Prostate gland (tissue), 2 donors: ENCODE measurements at regions of chr19 and their contacts with region 1.

Region 1: GRCh38 chr19:801030-801860 is 4.0 kb downstream of the PTBP1 start:
- DNase-seq: no peak
- H3K4me3 ChIP-seq: peak overlapping the region in 1 of 2 donors; percentile 99
- H3K27ac ChIP-seq: peak overlapping the region; percentile 95 to 100
- H3K4me1 ChIP-seq: peaks cover 42% of the 10 kb centered on the region
- H3K27me3 ChIP-seq: no peaks in the 10 kb centered on the region
- CTCF ChIP-seq: no peak
- POLR2A ChIP-seq: no peak

Region 2: DNA sequence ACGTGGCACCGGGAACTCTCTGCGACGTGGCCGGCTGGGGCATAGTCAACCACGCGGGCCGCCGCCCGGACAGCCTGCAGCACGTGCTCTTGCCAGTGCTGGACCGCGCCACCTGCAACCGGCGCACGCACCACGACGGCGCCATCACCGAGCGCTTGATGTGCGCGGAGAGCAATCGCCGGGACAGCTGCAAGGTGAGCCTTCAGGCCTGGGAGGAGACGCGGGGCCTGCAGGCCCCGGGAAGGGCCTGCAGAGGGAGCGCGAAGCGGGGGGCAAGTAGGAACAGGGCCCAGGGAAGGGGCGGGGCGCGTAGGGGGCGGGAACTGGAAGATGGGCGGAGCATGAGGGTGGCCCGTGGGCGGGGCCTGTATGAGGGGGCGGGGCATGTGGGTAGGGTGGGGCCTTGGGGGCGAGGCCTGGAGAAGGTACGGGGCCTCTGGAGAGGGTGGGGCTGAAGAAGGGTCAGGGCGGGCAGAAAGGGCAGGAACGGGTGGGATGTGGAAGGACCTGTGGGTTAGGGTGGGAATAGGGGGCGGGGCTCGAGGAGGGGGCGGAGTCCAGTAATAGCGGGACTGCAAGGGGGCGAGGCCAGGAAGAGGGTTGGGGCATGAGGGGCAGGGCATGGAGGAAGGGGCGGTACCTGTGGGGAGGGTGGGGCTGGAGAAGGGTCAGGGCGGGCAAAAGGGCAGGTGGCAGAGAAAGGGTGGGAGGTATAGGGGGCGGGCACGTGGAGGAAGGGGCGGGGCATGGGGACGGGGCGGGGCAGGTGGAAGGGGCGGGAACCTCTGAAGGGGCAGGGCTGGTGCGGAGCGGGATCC is 60.7 kb after region 1 on chr19:
- intact Hi-C with region 1: loop called (anchors 5 kb)
- DNase-seq: no peak
- H3K4me3 ChIP-seq: no peak overlapping the region
- H3K27ac ChIP-seq: no peak overlapping the region
- H3K4me1 ChIP-seq: no peaks in the 10 kb centered on the region
- H3K27me3 ChIP-seq: no peaks in the 10 kb centered on the region
- CTCF ChIP-seq: no peak
- POLR2A ChIP-seq: no peak